Activated naive CD4-positive, alpha-beta T cell treated with anti-CD3 and anti-CD28 coated beads for 36 hours (primary cell): ENCODE measurements at regions of chr10 and their contacts with region 1.

Region 1: GRCh38 chr10:86971232-86971991 is 3.1 kb downstream of the ADIRF start:
- DNase-seq: peak; percentile 83
- H3K4me3 Mint-ChIP-seq: peak overlapping the region; percentile 72
- H3K27ac Mint-ChIP-seq: peak overlapping the region; percentile 56
- H3K4me1 Mint-ChIP-seq: peaks cover 35% of the 10 kb centered on the region
- H3K27me3 Mint-ChIP-seq: no peaks in the 10 kb centered on the region

Region 2: DNA sequence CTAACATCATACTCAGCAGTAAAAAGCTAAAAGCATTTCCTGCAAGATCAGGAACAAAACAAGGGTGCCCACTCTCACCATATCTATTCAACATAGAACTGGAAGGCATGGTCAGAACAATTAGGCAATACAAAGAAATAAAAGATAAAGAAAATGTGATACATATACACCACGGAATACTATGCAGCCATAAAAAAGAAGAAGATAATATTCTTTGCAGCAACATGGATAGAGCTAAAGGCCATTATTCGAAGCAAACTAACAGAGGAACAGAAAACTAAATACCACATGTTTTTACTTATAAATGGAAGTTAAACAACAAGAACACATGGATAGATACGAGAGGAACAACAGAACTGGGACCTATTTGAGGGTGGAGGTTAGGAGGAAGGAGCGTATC is 1257.5 kb before region 1 on chr10:
- CTCF ChIA-PET with region 1: no interaction called
- intact Hi-C with region 1: no loop called
- DNase-seq: no peak
- H3K4me3 Mint-ChIP-seq: no peak overlapping the region
- H3K27ac Mint-ChIP-seq: no peak overlapping the region
- H3K4me1 Mint-ChIP-seq: no peaks in the 10 kb centered on the region
- H3K27me3 Mint-ChIP-seq: peaks cover 3% of the 10 kb centered on the region

Region 3: GRCh38 chr10:86944471-86944870 is 26.9 kb before region 1 on chr10:
- CTCF ChIA-PET with region 1: interaction called, 11 read pairs
- intact Hi-C with region 1: loop called (anchors 1 kb)
- DNase-seq: no peak
- H3K4me3 Mint-ChIP-seq: no peak overlapping the region
- H3K27ac Mint-ChIP-seq: no peak overlapping the region
- H3K4me1 Mint-ChIP-seq: peaks cover 9% of the 10 kb centered on the region
- H3K27me3 Mint-ChIP-seq: no peaks in the 10 kb centered on the region

Region 4: GRCh38 chr10:87079106-87079836 is 107.9 kb after region 1 on chr10:
- CTCF ChIA-PET with region 1: no interaction called
- intact Hi-C with region 1: loop called (anchors 1 kb)
- DNase-seq: no peak
- H3K4me3 Mint-ChIP-seq: no peak overlapping the region
- H3K27ac Mint-ChIP-seq: no peak overlapping the region
- H3K4me1 Mint-ChIP-seq: peaks cover 37% of the 10 kb centered on the region
- H3K27me3 Mint-ChIP-seq: no peaks in the 10 kb centered on the region